PC-3 (cell line): ENCODE measurements at regions of chr11 and their contacts with region 1.

Region 1: GRCh38 chr11:25794804-25795203 is 537.1 kb upstream of the ANO3 start:
- DNase-seq: no peak
- ATAC-seq: peak; percentile 24; the same call in 1 of the 2 replicates
- H3K4me3 ChIP-seq: no peak overlapping the region
- H3K27ac ChIP-seq: no peak overlapping the region
- H3K4me1 ChIP-seq: no peaks in the 10 kb centered on the region
- H3K27me3 ChIP-seq: no peaks in the 10 kb centered on the region
- CTCF ChIP-seq: no peak

Region 2: GRCh38 chr11:25655636-25656035 is 139.2 kb before region 1 on chr11:
- CTCF ChIA-PET with region 1: no interaction called
- POLR2A ChIA-PET with region 1: no interaction called
- intact Hi-C with region 1: no loop called
- DNase-seq: no peak
- ATAC-seq: no peak
- H3K4me3 ChIP-seq: no peak overlapping the region
- H3K27ac ChIP-seq: no peak overlapping the region
- H3K4me1 ChIP-seq: no peaks in the 10 kb centered on the region
- H3K27me3 ChIP-seq: no peaks in the 10 kb centered on the region
- CTCF ChIP-seq: no peak

Region 3: GRCh38 chr11:25961539-25961938 is 166.7 kb after region 1 on chr11:
- CTCF ChIA-PET with region 1: no interaction called
- POLR2A ChIA-PET with region 1: no interaction called
- intact Hi-C with region 1: loop called (anchors 2 kb)
- DNase-seq: peak; percentile 4
- ATAC-seq: 0 out of 2 replicates have a peak, but pooled peaks have one; percentile 50
- H3K4me3 ChIP-seq: no peak overlapping the region
- H3K27ac ChIP-seq: no peak overlapping the region
- H3K4me1 ChIP-seq: no peaks in the 10 kb centered on the region
- H3K27me3 ChIP-seq: no peaks in the 10 kb centered on the region
- CTCF ChIP-seq: peak; percentile 29; the same call in 1 of the 2 replicates